ENCODE measurements at regions of chr15 and their contacts with region 1.

Region 1: DNA sequence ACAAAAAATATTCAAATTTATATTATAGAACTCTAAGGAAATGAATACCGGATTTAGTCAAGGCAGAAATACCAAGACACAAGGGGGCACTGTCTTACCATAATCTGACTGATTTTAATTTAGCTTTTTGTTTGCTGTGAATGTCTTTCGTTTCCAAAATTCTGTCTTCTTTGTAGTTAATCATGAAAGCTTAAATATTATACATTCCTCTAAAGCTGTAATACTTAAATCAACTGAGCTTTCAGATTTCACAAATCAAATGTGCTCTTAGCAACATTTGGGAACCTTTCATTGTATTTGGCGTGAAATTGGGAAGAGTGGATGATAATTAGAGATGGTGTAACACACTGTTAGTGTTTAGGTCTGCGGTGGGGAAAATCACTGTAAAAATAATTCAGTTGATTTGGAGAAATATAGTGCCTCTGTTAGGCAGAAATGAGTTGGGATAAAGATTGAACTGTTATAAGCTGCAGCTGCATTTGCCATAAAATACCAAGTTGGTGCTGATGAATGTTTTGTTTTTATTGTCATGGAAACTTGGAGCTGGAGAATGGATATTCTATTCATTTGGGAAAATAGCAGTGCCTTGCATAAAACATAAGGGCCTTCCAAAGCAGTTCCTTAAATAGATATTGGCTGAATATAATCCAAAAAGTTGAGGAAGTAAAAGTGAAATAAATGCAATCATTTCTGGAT is 228.2 kb downstream of the TCF12 start:
- DNase-seq: no peak
- ATAC-seq: peak; percentile 60 to 64
- H3K4me3 ChIP-seq: peak overlapping the region; percentile 46
- H3K27ac ChIP-seq: no peak overlapping the region
- H3K4me1 ChIP-seq: peaks cover 4% of the 10 kb centered on the region
- H3K27me3 ChIP-seq: no peaks in the 10 kb centered on the region

Region 2: DNA sequence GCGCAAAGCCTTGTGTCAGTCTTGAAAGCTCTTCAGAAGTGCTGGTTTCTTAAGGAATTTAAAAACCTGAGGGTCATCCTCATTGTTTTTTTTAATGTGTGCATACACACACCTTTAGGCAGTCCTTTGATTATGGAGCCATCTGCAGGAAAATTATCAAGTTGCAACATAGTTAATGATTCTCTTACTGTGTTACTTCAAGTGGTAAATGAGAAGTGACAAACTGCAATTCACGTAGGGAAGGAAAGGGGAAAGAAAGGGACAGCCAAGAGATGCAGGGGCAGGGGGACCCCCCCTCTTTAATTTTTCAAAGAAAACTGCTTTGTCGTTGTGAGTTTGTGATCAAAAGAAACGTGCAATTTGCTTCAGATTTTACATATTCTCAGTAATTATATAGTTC is 67.2 kb after region 1 on chr15:
- intact Hi-C with region 1: loop called (anchors 5 to 10 kb)
- DNase-seq: no peak
- ATAC-seq: peak; percentile 61 to 77
- H3K4me3 ChIP-seq: no peak overlapping the region
- H3K27ac ChIP-seq: no peak overlapping the region
- H3K4me1 ChIP-seq: no peaks in the 10 kb centered on the region
- H3K27me3 ChIP-seq: no peaks in the 10 kb centered on the region

Region 3: DNA sequence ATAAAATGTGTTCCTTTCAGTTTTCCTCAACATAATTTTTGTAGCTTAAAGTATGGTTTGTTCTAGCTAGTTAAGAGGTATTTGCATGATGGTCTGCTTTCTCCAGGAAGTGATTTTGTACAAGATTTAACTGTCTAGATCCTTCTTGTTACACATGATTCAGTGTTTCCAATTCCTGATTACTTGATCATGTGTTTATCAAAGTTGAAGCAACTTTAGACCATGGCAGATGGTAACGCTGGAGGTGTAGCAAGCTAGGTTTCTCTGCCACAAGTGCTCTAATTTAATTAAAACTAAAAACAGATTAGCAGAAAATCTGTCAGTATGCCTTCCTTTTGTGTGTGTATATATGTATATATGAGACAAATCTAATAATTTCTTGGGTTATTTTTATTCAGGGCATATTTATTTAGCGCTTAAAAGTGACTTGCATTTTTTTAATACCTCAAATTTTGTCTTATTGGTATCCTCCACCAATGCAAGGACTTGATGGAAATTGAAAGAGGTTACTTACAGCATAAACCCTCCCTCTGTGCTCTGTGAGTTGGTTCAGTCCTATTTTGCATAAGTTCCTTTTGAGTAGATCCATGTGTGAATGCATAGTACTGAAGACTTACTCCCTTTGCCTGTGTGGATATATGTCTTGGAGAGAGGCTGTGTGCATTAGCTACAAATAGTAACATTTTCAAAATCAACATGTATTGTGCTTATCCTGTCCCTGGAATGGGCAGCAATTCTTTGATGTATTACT is 72.3 kb after region 1 on chr15:
- intact Hi-C with region 1: loop called (anchors 5 to 10 kb)
- DNase-seq: no peak
- ATAC-seq: no peak
- H3K4me3 ChIP-seq: no peak overlapping the region
- H3K27ac ChIP-seq: no peak overlapping the region
- H3K4me1 ChIP-seq: peaks cover 1% of the 10 kb centered on the region
- H3K27me3 ChIP-seq: no peaks in the 10 kb centered on the region

Region 4: GRCh38 chr15:57306161-57306943 is 159.7 kb after region 1 on chr15:
- intact Hi-C with region 1: loop called (anchors 5 to 10 kb)
- DNase-seq: peak; percentile 88 to 96 (median 96)
- ATAC-seq: peak; percentile 89
- H3K4me3 ChIP-seq: peak overlapping the region; percentile 55
- H3K27ac ChIP-seq: no peak overlapping the region
- H3K4me1 ChIP-seq: no peaks in the 10 kb centered on the region
- H3K27me3 ChIP-seq: no peaks in the 10 kb centered on the region

Region 5: GRCh38 chr15:57527382-57528091 is 380.9 kb after region 1 on chr15:
- intact Hi-C with region 1: loop called in 1 of 4 experiments (anchors 10 kb)
- DNase-seq: peak in 2 of 3 donors; percentile 51 to 66
- ATAC-seq: peak; percentile 78 to 82
- H3K4me3 ChIP-seq: no peak overlapping the region
- H3K27ac ChIP-seq: no peak overlapping the region
- H3K4me1 ChIP-seq: peaks cover 2% of the 10 kb centered on the region
- H3K27me3 ChIP-seq: no peaks in the 10 kb centered on the region